ENCODE measurements at regions of chr10 and their contacts with region 1.

Region 1: DNA sequence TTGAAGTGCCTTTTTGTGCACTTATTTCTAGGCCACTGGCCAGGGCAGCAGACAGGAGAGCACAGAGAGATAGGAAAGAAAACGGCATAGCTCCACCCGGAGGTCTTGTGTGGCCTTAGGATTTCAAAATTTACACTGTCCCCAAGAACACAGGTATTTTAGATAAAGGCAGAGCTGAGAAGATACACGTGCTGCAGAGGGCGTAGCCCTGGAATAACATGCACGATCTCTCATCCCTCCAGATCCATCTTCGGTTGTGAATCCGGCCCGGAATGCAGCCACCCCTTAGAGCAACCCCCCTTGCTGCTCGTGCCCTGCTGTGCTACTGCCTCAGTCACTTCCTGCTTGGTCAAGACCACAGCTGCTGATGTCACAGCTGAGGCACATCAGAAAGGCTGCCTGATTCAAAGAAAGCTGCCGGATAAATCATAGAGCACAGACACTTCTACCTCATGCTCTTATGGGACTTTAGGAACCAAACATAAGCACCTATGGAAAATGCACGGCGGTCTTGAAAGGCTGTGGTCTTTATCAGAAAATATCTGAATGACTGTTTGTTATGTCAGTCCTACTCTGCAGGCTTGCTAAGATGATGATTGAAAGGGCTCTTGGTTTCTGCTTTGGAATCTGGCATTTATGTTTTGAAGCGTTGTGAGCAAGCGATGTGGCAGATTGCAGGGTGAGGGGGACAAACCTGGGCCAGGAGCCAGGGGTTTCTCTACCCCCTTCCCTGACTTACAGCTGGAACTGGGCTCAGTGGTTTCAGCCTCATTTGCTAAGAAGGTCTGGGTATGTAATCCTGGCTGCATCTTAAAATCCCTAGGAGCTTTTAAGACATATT is 152.0 kb downstream of the SVIL start:
- DNase-seq: peak; percentile 22
- H3K4me3 Mint-ChIP-seq: peak overlapping the region; percentile 0
- H3K27ac Mint-ChIP-seq: peak overlapping the region; percentile 74
- H3K4me1 Mint-ChIP-seq: peaks cover 56% of the 10 kb centered on the region
- H3K27me3 Mint-ChIP-seq: no peaks in the 10 kb centered on the region

Region 2: GRCh38 chr10:29409241-29410057 is 73.4 kb before region 1 on chr10:
- intact Hi-C with region 1: loop called (anchors 1 kb)
- DNase-seq: peak; percentile 36
- H3K4me3 Mint-ChIP-seq: peak overlapping the region; percentile 97
- H3K27ac Mint-ChIP-seq: peak overlapping the region; percentile 89
- H3K4me1 Mint-ChIP-seq: peaks cover 31% of the 10 kb centered on the region
- H3K27me3 Mint-ChIP-seq: no peaks in the 10 kb centered on the region

Region 3: GRCh38 chr10:29470355-29470705 is 12.5 kb before region 1 on chr10:
- intact Hi-C with region 1: loop called (anchors 1 kb)
- DNase-seq: no peak
- H3K4me3 Mint-ChIP-seq: no peak overlapping the region
- H3K27ac Mint-ChIP-seq: no peak overlapping the region
- H3K4me1 Mint-ChIP-seq: peaks cover 28% of the 10 kb centered on the region
- H3K27me3 Mint-ChIP-seq: no peaks in the 10 kb centered on the region

Region 4: DNA sequence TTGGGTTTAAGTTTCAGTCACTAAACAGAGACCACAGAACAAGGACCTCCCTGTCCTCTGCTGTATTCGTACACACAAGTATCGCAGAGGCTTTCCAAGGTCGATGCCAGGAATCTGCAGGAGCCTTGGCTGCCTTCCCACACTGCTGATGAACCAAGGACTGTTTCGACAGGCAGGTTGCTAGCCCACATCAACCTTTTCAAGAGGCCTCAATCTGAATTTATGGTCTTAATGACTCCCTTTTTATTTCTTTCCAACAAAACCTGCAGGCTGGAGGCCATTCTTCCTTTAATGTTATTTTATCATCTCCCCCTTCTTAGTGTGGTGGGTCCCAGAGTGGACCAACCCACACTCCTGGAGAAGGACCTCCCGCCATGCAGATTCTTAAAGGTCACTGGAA is 530.9 kb after region 1 on chr10:
- intact Hi-C with region 1: no loop called
- DNase-seq: no peak
- H3K4me3 Mint-ChIP-seq: peak overlapping the region; percentile 70
- H3K27ac Mint-ChIP-seq: peak overlapping the region; percentile 94
- H3K4me1 Mint-ChIP-seq: peaks cover 68% of the 10 kb centered on the region
- H3K27me3 Mint-ChIP-seq: no peaks in the 10 kb centered on the region

Measured in activated T-helper 2 cell treated with anti-CD3 and anti-CD28 coated beads, Interferon-gamma antibody, Interleukin-2, Interleukin-4, amounts not matched to agents 10 μg/mL and 5 μg/mL and 100 μg/mL, durations not matched to agents 14 hours and 24 hours and 36 hours (primary cell).